A673 (cell line): ENCODE measurements at regions of chr1 and their contacts with region 1.

Region 1: DNA sequence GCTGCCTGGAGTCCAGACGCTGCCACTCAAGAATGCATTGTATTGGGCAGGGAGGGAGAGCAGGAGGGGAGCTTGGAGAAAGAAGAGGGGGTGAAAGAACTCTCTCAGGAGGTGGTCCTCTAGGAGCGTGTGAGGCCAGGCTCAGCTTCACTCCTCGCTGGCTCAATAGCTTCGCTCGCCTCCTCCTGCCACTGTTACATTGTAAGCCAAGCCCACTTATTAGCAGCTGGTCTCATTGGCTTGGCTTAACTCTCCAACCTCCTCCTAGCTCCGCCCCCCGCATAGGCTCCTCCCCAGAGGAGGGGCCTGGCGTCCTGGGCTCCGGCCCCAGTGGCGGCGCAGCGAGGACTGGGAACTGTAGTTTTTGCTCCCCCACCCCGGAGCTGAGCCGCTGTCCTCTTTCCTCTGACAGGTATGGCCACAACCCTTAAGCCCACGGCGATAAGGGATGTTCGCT is at the start of gene KCNN3:
- DNase-seq: peak; percentile 98
- H3K4me3 ChIP-seq: peak within 1 kb of the TSS; percentile 43
- H3K27ac ChIP-seq: no peak within 1 kb of the TSS
- H3K4me1 ChIP-seq: peaks cover 37% of the 10 kb centered on the region
- H3K27me3 ChIP-seq: no peaks in the 10 kb centered on the region
- CTCF ChIP-seq: no peak
- total RNA-seq, gene KCNN3: 0.73 and 1.5 TPM in 2 replicates

Region 2: DNA sequence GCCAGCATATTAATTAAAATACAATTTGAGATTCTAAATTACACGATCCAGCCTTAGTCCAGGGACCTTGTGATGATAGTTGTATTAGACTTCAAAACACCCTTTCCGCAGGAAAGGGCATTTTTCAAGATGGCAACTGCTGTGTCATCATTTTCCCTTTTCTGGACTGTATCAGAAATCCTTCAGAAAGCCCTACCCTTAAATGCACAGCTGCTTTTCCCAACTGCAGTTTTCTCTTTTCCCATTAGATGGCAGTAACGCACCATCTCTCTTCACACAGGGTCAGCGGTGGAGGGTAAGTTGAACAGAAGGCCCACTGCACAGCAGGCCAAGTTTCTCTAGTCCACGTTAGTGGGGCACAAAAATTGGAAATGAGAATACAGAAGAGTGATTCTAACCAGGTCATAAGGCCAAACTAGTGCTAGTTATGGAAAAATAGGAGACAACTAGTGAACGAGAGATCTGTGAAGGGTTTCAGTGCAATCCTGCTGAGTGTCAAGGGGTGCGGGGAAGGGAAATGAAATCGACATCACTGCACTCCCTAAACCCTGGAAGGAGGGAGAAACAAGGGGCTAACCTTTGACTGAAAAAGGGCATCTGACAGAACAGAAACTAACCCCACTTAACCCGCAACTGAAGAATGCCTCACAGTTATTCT is 390.2 kb before region 1 on chr1:
- CTCF ChIA-PET with region 1: no interaction called
- POLR2A ChIA-PET with region 1: no interaction called
- intact Hi-C with region 1: loop called (anchors 10 kb)
- DNase-seq: peak; percentile 95
- H3K4me3 ChIP-seq: no peak overlapping the region
- H3K27ac ChIP-seq: peak overlapping the region; percentile 39
- H3K4me1 ChIP-seq: peaks cover 33% of the 10 kb centered on the region
- H3K27me3 ChIP-seq: no peaks in the 10 kb centered on the region
- CTCF ChIP-seq: peak; percentile 95

Region 3: GRCh38 chr1:154607106-154607608 is 263.0 kb before region 1 on chr1:
- CTCF ChIA-PET with region 1: no interaction called
- POLR2A ChIA-PET with region 1: no interaction called
- intact Hi-C with region 1: no loop called
- DNase-seq: peak; percentile 37
- H3K4me3 ChIP-seq: peak overlapping the region; percentile 91
- H3K27ac ChIP-seq: peak overlapping the region; percentile 98
- H3K4me1 ChIP-seq: peaks cover 23% of the 10 kb centered on the region
- H3K27me3 ChIP-seq: no peaks in the 10 kb centered on the region
- CTCF ChIP-seq: no peak

Region 4: GRCh38 chr1:154765970-154766369 is 104.2 kb before region 1 on chr1:
- CTCF ChIA-PET with region 1: no interaction called
- POLR2A ChIA-PET with region 1: no interaction called
- intact Hi-C with region 1: loop called (anchors 5 kb)
- DNase-seq: peak; percentile 58
- H3K4me3 ChIP-seq: no peak overlapping the region
- H3K27ac ChIP-seq: no peak overlapping the region
- H3K4me1 ChIP-seq: peaks cover 7% of the 10 kb centered on the region
- H3K27me3 ChIP-seq: peaks cover 19% of the 10 kb centered on the region
- CTCF ChIP-seq: peak; percentile 61

Region 5: GRCh38 chr1:154896771-154897391 is 26.7 kb after region 1 on chr1:
- CTCF ChIA-PET with region 1: no interaction called
- POLR2A ChIA-PET with region 1: no interaction called
- intact Hi-C with region 1: no loop called
- DNase-seq: no peak
- H3K4me3 ChIP-seq: no peak overlapping the region
- H3K27ac ChIP-seq: peak overlapping the region; percentile 47
- H3K4me1 ChIP-seq: peaks cover 19% of the 10 kb centered on the region
- H3K27me3 ChIP-seq: no peaks in the 10 kb centered on the region
- CTCF ChIP-seq: no peak

Region 6: DNA sequence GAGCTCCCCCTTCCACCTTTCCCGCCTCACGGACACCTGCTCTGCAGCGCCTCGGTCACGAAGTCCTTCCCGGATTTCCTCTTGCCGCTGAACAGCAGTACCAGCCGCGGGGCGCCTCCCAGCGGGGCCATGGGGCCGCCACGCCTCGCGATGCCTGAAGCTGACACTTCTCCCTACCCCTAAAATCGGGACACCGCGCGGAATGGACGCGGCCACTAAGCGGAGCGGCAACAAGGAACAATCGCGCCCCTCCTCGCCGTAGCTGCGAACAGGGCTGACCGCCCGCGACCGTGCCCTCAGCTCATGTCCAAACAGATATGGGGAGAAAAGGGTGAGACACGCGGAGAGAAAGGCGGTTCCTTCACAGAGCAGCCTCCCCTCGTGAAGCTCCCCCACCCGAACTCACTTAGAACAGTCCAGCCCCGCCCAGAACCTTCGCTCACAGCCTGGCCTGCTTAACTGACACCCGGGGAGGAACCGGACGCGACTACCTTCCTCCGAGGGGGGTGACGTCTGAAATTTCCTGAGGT is 66.5 kb after region 1 on chr1 and contains the start of gene PMVK:
- CTCF ChIA-PET with region 1: interaction called, 3 read pairs
- POLR2A ChIA-PET with region 1: no interaction called
- intact Hi-C with region 1: loop called (anchors 5 kb)
- DNase-seq: peak; percentile 97
- H3K4me3 ChIP-seq: peak within 1 kb of the TSS; percentile 53
- H3K27ac ChIP-seq: peak within 1 kb of the TSS; percentile 99
- H3K4me1 ChIP-seq: peaks cover 41% of the 10 kb centered on the region
- H3K27me3 ChIP-seq: no peaks in the 10 kb centered on the region
- CTCF ChIP-seq: peak; percentile 50; the same call in 1 of the 2 replicates
- total RNA-seq, gene PMVK: 30.8 and 34.4 TPM in 2 replicates

Region 7: DNA sequence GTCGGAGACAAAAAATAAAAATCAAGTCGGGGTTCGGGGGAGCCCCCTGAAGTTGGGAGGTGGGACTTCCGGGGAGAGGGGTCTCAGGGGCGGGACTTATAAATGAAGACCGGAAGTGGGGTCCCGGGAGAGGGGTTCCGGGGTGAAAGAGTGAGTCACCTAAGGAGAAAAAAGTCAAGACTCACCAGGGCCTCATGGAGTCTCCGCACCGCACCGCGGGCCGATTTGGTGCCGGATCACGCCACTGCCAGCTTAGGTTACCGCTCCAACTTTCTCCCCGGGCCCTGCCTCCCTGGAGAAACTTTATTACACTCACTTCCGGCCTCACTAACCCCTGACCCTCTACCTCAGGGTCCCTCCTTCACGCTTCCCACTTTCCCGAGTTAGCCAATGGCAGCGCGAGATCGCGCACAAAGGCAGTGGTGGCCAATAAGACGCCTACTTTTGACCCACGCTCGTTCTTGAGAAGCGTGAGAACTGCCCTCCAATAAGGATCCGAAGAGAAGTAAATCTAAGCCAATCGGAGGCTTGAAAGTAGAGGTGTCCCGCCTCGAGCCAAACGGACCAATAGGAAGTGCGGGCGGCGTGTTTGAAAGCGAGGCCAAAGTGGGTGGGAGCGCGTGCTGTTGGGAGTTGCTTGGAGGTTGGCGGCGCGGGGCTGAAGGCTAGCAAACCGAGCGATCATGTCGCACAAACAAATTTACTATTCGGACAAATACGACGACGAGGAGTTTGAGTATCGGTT is 104.1 kb after region 1 on chr1 and contains the start of gene CKS1B:
- CTCF ChIA-PET with region 1: no interaction called
- POLR2A ChIA-PET with region 1: no interaction called
- intact Hi-C with region 1: no loop called
- DNase-seq: peak; percentile 100
- H3K4me3 ChIP-seq: peak within 1 kb of the TSS; percentile 59
- H3K27ac ChIP-seq: peak within 1 kb of the TSS; percentile 96
- H3K4me1 ChIP-seq: peaks cover 48% of the 10 kb centered on the region
- H3K27me3 ChIP-seq: no peaks in the 10 kb centered on the region
- CTCF ChIP-seq: no peak
- total RNA-seq, gene CKS1B: 291 and 295 TPM in 2 replicates

Region 8: DNA sequence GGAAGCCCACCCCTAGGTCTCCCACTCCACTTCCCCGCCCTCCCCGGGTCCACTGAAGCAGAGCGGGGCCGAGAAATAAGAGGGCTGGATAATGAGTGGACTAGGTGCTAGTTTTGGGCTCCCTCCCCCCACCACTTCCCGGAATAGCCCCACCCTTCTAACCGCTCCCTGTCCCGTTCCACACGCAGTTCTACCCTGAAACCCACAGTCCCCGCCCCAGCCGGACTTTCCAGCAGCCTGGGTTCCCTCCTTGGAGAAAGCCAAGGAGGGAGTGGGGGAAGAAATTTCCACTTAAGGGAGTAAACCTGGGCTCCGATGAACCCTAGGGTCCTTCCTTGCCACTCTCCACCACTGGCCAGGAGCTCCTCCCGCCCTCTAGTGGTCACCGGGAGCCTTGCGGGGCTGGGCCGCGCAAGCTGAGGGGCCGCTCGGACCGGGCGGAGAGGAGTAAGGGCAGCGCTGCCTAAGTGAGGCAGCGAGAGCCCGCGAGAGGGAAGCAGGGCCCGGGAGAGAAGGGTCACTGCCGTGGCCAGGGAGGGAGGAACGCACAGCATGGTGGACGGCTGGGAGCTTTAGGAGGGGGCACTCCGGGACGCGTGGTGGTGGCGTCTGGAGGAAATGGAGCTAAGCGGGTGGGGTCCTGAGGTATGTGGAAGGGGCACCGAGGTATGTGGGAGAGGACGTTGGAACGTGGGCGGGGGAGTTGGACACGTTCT is 323.3 kb after region 1 on chr1:
- CTCF ChIA-PET with region 1: no interaction called
- POLR2A ChIA-PET with region 1: interaction called, 14 read pairs
- intact Hi-C with region 1: no loop called
- DNase-seq: peak; percentile 89
- H3K4me3 ChIP-seq: peak overlapping the region; percentile 57
- H3K27ac ChIP-seq: peak overlapping the region; percentile 84
- H3K4me1 ChIP-seq: peaks cover 22% of the 10 kb centered on the region
- H3K27me3 ChIP-seq: no peaks in the 10 kb centered on the region
- CTCF ChIP-seq: peak; percentile 99